CD8-positive, alpha-beta T cell (primary cell): ENCODE measurements at regions of chr4 and their contacts with region 1.

Region 1: DNA sequence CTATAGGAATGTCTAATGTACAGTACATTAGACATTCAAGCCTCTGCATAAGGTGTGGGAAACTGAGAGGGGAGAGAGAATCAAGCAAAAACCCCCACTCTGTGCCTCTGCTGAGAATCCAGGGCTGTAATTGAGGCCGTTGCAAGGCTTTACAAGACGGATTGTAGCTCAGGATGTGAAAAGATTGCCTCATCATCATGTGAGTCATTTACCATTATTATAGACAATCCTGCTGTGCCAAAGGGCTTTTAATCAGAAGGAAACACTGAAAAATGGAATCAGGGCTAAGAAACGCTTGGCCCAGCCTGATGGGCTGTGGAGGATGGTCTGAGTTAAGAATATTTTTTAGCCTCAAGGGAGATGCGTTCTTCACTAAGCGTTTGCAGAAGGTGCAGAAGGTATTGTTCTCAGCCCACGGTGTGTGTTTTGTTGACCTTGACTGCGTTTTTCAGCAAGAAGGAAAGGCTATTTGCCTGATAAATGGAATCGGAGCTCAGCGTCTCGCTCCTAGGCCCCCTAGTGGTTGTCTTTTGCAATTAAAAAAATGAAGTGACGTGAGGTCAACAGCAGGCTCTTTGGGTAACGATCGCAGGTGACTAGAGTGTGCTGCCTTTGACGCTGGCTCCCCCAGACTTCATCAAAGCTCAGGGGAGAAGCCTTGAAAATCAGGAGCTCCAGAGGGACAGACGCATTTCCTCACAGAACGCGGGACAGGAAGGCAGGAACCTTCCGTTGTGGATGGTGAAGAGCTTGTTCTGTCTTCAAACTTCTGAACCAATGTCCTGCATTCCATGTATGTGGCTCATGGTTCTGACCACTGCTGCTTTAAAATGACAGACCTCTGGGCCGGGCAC is 18.1 kb upstream of the CHRNA9 start:
- DNase-seq: peak; percentile 39 to 89 (median 62)
- ATAC-seq: peak; percentile 66
- H3K4me3 ChIP-seq: peak overlapping the region; percentile 38 to 43
- H3K4me3 Mint-ChIP-seq: peak overlapping the region; percentile 82
- H3K27ac ChIP-seq: peak overlapping the region; percentile 63 to 81
- H3K27ac Mint-ChIP-seq: peak overlapping the region; percentile 95
- H3K4me1 ChIP-seq: peaks cover 24% of the 10 kb centered on the region
- H3K4me1 Mint-ChIP-seq: peaks cover 45% of the 10 kb centered on the region
- H3K27me3 ChIP-seq: no peaks in the 10 kb centered on the region
- H3K27me3 Mint-ChIP-seq: no peaks in the 10 kb centered on the region
- CTCF ChIP-seq: peak; percentile 77

Region 2: DNA sequence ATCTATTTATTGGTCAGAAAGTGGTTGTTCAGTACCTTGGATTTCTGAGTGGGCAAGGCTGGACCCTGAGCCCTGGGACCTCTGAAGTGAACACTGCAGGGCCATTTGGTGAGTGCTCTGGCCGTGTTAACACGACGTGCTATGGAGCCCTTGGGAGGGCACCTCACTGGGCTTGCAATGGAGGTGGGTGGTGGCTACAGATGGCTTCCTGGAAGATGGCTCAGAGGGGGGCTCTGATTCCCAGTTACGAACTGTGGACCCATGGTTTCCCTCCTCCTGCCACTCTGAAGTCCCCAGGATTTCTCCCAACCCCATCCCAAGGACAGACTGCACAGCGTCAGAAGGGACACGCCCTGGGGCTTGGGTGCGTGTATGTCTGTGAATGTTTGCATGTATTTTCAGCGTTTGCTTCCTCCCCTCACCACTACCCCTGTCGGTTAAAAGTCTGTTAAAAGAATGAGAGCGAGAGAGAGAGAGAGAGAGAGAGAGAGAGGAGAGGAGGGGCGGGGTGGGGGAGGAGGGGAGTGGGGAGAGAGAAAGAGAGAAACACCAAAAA is 123.9 kb before region 1 on chr4:
- CTCF ChIA-PET with region 1: interaction called, 23 read pairs
- POLR2A ChIA-PET with region 1: interaction called, 11 read pairs
- intact Hi-C with region 1: no loop called
- DNase-seq: peak in 6 of 9 experiments; percentile 49 to 82 (median 65)
- ATAC-seq: peak; percentile 14
- H3K4me3 ChIP-seq: peak overlapping the region; percentile 36 to 42
- H3K4me3 Mint-ChIP-seq: peak overlapping the region; percentile 100
- H3K27ac ChIP-seq: peak overlapping the region; percentile 60 to 96
- H3K27ac Mint-ChIP-seq: peak overlapping the region; percentile 100
- H3K4me1 ChIP-seq: peaks cover 52% of the 10 kb centered on the region
- H3K4me1 Mint-ChIP-seq: peaks cover 64% of the 10 kb centered on the region
- H3K27me3 ChIP-seq: no peaks in the 10 kb centered on the region
- H3K27me3 Mint-ChIP-seq: no peaks in the 10 kb centered on the region
- CTCF ChIP-seq: no peak

Region 3: GRCh38 chr4:40205259-40206198 is 111.5 kb before region 1 on chr4:
- CTCF ChIA-PET with region 1: interaction called, 59 read pairs
- POLR2A ChIA-PET with region 1: interaction called, 10 read pairs
- intact Hi-C with region 1: no loop called
- DNase-seq: peak in 2 of 9 experiments; percentile 56 to 71
- ATAC-seq: peak; percentile 32
- H3K4me3 ChIP-seq: peak overlapping the region; percentile 30 to 83
- H3K4me3 Mint-ChIP-seq: peak overlapping the region; percentile 97
- H3K27ac ChIP-seq: peak overlapping the region; percentile 22 to 96
- H3K27ac Mint-ChIP-seq: peak overlapping the region; percentile 92
- H3K4me1 ChIP-seq: peaks cover 47% of the 10 kb centered on the region
- H3K4me1 Mint-ChIP-seq: peaks cover 70% of the 10 kb centered on the region
- H3K27me3 ChIP-seq: no peaks in the 10 kb centered on the region
- H3K27me3 Mint-ChIP-seq: no peaks in the 10 kb centered on the region
- CTCF ChIP-seq: no peak

Region 4: DNA sequence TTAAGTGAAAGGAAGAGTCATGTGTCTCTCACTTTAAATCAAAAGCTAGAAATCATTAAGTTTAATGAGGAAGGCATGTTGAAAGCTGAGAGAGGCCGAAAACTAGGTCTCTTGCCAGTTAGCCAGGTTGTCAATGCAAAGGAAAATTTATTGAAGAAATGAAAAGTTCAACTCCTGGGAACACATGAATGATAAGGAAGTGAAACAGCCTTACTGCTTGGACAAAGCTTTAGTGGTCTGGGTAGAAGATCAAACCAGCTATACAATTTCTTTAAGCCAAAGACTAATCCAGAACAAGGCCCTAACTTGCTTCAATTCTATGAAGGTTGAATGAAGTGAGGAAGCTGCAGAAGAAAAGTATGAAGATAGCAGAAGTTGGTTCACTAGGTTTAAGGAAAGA is 95.3 kb before region 1 on chr4:
- CTCF ChIA-PET with region 1: interaction called, 23 read pairs
- POLR2A ChIA-PET with region 1: interaction called, 3 read pairs
- intact Hi-C with region 1: no loop called
- DNase-seq: no peak
- ATAC-seq: no peak
- H3K4me3 ChIP-seq: no peak overlapping the region
- H3K4me3 Mint-ChIP-seq: peak overlapping the region; percentile 71
- H3K27ac ChIP-seq: peak overlapping the region in 1 of 2 experiments; percentile 96
- H3K27ac Mint-ChIP-seq: peak overlapping the region; percentile 87
- H3K4me1 ChIP-seq: peaks cover 97% of the 10 kb centered on the region
- H3K4me1 Mint-ChIP-seq: peaks cover 93% of the 10 kb centered on the region
- H3K27me3 ChIP-seq: no peaks in the 10 kb centered on the region
- H3K27me3 Mint-ChIP-seq: no peaks in the 10 kb centered on the region
- CTCF ChIP-seq: no peak

Region 5: GRCh38 chr4:40238700-40239548 is 78.1 kb before region 1 on chr4:
- CTCF ChIA-PET with region 1: interaction called, 15 read pairs
- POLR2A ChIA-PET with region 1: interaction called, 4 read pairs
- intact Hi-C with region 1: loop called in 1 of 2 experiments (anchors 2 kb)
- DNase-seq: peak; percentile 63 to 96 (median 73)
- ATAC-seq: peak; percentile 90
- H3K4me3 ChIP-seq: peak overlapping the region; percentile 46 to 48
- H3K4me3 Mint-ChIP-seq: peak overlapping the region; percentile 82
- H3K27ac ChIP-seq: peak overlapping the region; percentile 68 to 98
- H3K27ac Mint-ChIP-seq: peak overlapping the region; percentile 95
- H3K4me1 ChIP-seq: peaks cover 95% of the 10 kb centered on the region
- H3K4me1 Mint-ChIP-seq: peaks cover 94% of the 10 kb centered on the region
- H3K27me3 ChIP-seq: no peaks in the 10 kb centered on the region
- H3K27me3 Mint-ChIP-seq: no peaks in the 10 kb centered on the region
- CTCF ChIP-seq: no peak

Region 6: GRCh38 chr4:40283968-40284367 is 33.0 kb before region 1 on chr4:
- CTCF ChIA-PET with region 1: interaction called, 23 read pairs
- POLR2A ChIA-PET with region 1: interaction called, 4 read pairs
- intact Hi-C with region 1: no loop called
- DNase-seq: peak; percentile 53 to 94 (median 76)
- ATAC-seq: peak; percentile 93
- H3K4me3 ChIP-seq: no peak overlapping the region
- H3K4me3 Mint-ChIP-seq: peak overlapping the region; percentile 62
- H3K27ac ChIP-seq: peak overlapping the region; percentile 27 to 89
- H3K27ac Mint-ChIP-seq: peak overlapping the region; percentile 97
- H3K4me1 ChIP-seq: peaks cover 51% of the 10 kb centered on the region
- H3K4me1 Mint-ChIP-seq: peaks cover 70% of the 10 kb centered on the region
- H3K27me3 ChIP-seq: no peaks in the 10 kb centered on the region
- H3K27me3 Mint-ChIP-seq: no peaks in the 10 kb centered on the region
- CTCF ChIP-seq: peak; percentile 54